ENCODE measurements at regions of chr5 and their contacts with region 1.

Region 1: DNA sequence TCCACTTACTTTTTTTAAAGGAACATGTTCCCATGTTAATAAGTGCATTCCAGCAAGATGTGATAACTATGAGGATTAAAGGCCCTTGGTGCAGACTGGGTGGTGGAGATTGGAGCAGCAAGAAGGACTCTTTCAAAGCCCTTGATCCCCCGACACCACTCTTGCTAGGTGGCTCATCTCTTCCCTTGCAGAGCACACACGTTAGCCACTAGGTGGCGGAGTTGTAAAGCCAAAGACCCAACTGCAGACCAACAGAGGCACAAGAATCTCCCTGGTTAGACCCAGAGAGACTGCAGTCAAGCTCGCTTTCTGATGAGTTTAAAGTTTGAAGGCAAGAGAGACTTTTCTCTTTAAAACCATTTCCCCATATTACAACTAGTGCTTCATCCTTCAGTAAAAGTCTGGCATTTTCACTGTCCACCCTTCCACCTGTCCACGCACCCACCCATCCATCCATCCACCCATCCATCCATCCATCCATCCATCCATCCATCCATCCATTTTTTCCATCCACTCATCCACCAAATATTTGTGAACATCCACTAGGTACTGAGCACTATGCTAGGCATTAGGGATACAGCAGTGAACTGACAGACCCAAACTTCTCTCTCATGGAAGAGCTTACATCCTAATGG is 226.9 kb downstream of the MSX2 start:
- DNase-seq: peak; percentile 63 to 73 (median 68)
- ATAC-seq: peak; percentile 94
- H3K4me3 ChIP-seq: no peak overlapping the region
- H3K27ac ChIP-seq: no peak overlapping the region
- H3K4me1 ChIP-seq: no peaks in the 10 kb centered on the region
- H3K27me3 ChIP-seq: no peaks in the 10 kb centered on the region; a peak in 1 of 5 replicates
- CTCF ChIP-seq: peak; percentile 76 to 83 (median 83)
- EP300 ChIP-seq: no peak
- POLR2A ChIP-seq: no peak
- RAD21 ChIP-seq: peak; percentile 87 to 89

Region 2: GRCh38 chr5:175464074-175464941 is 513.0 kb after region 1 on chr5:
- CTCF ChIA-PET with region 1: interaction called, 5 read pairs
- POLR2A ChIA-PET with region 1: no interaction called
- in situ Hi-C with region 1: no loop called
- intact Hi-C with region 1: loop called (anchors 5 kb)
- DNase-seq: peak; percentile 45 to 59 (median 56)
- ATAC-seq: peak; percentile 97
- H3K4me3 ChIP-seq: no peak overlapping the region
- H3K27ac ChIP-seq: no peak overlapping the region
- H3K4me1 ChIP-seq: no peaks in the 10 kb centered on the region
- H3K27me3 ChIP-seq: peaks cover 16 to 41% of the 10 kb centered on the region in 2 experiments
- CTCF ChIP-seq: peak; percentile 56 to 75 (median 67)
- EP300 ChIP-seq: no peak
- POLR2A ChIP-seq: no peak
- RAD21 ChIP-seq: no peak

Region 3: DNA sequence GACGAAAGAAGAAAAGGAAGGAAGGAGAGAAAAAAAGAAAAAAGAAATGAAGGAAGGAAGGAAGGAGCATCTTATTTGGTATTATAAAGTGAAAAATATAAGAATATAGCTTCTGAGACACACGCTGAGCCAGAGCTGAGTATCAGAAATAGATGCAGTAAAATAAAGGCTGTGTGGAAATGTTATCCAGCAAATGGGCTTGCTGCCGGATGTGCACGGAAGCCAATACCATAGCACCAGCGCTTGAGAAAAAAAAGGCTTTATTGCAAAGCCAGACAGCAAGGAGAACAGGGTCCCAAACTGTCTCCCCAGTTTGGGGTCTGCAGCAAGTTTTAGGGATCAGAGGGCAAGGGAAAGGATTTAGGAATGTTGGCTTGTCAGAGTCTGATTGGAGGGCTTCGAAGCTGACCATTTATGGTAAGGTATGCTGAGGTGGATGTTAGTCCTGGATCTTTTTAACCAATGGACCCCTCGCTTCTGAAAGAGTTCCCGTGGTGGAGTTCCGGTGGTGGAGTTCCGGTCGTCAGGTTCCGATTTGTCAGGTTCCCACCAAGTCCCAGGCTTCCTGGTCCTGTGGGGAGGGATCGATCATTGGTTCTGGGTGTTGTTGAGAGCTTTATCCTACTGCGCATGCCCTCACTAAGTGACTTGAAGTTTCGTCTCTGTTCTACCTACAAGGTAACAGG is 597.5 kb after region 1 on chr5:
- CTCF ChIA-PET with region 1: no interaction called
- POLR2A ChIA-PET with region 1: no interaction called
- in situ Hi-C with region 1: no loop called
- intact Hi-C with region 1: no loop called
- DNase-seq: no peak
- ATAC-seq: no peak
- H3K4me3 ChIP-seq: no peak overlapping the region
- H3K27ac ChIP-seq: no peak overlapping the region
- H3K4me1 ChIP-seq: peaks cover 0 to 7% of the 10 kb centered on the region in 2 experiments; a peak in 2 of 5 replicates
- H3K27me3 ChIP-seq: peaks cover 22 to 47% of the 10 kb centered on the region in 2 experiments
- CTCF ChIP-seq: no peak
- EP300 ChIP-seq: no peak
- POLR2A ChIP-seq: no peak
- RAD21 ChIP-seq: no peak

Measured in K562 (cell line).